ENCODE measurements at regions of chr2 and their contacts with region 1.

Region 1: GRCh38 chr2:218852911-218853667 is 6.5 kb upstream of the WNT6 start:
- DNase-seq: peak; percentile 72
- H3K4me3 Mint-ChIP-seq: no peak overlapping the region
- H3K27ac Mint-ChIP-seq: no peak overlapping the region
- H3K4me1 Mint-ChIP-seq: peaks cover 24% of the 10 kb centered on the region
- H3K27me3 Mint-ChIP-seq: peaks cover 52% of the 10 kb centered on the region
- CTCF ChIP-seq: peak; percentile 86

Region 2: GRCh38 chr2:218659258-218659987 is 193.7 kb before region 1 on chr2 and contains the starts of genes BCS1L and ZNF142:
- CTCF ChIA-PET with region 1: interaction called, 27 read pairs
- intact Hi-C with region 1: no loop called
- DNase-seq: peak; percentile 96
- H3K4me3 Mint-ChIP-seq: peak within 1 kb of the TSS; percentile 99
- H3K27ac Mint-ChIP-seq: peak within 1 kb of the TSS; percentile 87
- H3K4me1 Mint-ChIP-seq: peaks cover 22% of the 10 kb centered on the region
- H3K27me3 Mint-ChIP-seq: no peaks in the 10 kb centered on the region
- CTCF ChIP-seq: no peak
- total RNA-seq, gene BCS1L: 57.9 and 61.7 TPM in 2 replicates
- total RNA-seq, gene ZNF142: 42.8 and 43.3 TPM in 2 replicates

Region 3: GRCh38 chr2:218691234-218691633 is 161.9 kb before region 1 on chr2:
- CTCF ChIA-PET with region 1: interaction called, 25 read pairs
- intact Hi-C with region 1: no loop called
- DNase-seq: no peak
- H3K4me3 Mint-ChIP-seq: no peak overlapping the region
- H3K27ac Mint-ChIP-seq: no peak overlapping the region
- H3K4me1 Mint-ChIP-seq: no peaks in the 10 kb centered on the region
- H3K27me3 Mint-ChIP-seq: no peaks in the 10 kb centered on the region
- CTCF ChIP-seq: no peak

Region 4: GRCh38 chr2:218710687-218711549 is 142.2 kb before region 1 on chr2 and contains the start of gene TTLL4:
- CTCF ChIA-PET with region 1: no interaction called
- intact Hi-C with region 1: loop called (anchors 5 kb)
- DNase-seq: peak; percentile 98
- H3K4me3 Mint-ChIP-seq: peak within 1 kb of the TSS; percentile 79
- H3K27ac Mint-ChIP-seq: peak within 1 kb of the TSS; percentile 90
- H3K4me1 Mint-ChIP-seq: peaks cover 20% of the 10 kb centered on the region
- H3K27me3 Mint-ChIP-seq: no peaks in the 10 kb centered on the region
- CTCF ChIP-seq: peak; percentile 86
- total RNA-seq, gene TTLL4: 67.3 and 75.5 TPM in 2 replicates

Region 5: DNA sequence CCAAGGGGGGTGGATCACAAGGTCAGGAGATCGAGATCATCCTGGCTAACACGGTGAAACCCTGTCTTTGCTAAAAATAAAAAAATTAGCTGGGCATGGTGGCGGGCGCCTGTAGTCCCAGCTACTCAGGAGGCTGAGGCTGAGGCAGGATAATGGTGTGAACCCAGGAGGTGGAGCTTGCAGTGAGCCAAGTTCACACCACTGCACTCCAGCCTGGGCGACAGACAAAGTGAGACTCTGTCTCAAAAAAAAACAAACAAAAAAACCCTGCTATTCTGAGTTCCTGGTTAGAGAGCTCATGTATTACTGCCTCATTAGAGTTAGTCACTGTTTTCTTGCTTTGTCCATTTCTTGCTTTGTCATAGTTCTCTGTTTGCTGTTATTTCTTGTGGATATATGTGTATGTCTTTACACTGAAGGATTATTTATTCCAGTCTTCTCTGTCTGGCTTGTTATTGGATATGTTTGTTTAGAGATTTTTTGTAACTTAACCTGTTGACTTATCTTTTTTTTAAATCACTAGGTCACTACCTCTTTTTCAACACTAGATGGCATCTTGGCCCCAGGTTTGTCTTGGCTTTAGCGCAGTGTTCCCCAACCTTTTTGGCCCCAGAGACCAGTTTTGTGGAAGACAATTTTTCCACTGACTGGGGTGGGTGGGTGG is 125.5 kb before region 1 on chr2:
- CTCF ChIA-PET with region 1: interaction called, 13 read pairs
- intact Hi-C with region 1: no loop called
- DNase-seq: no peak
- H3K4me3 Mint-ChIP-seq: no peak overlapping the region
- H3K27ac Mint-ChIP-seq: no peak overlapping the region
- H3K4me1 Mint-ChIP-seq: peaks cover 25% of the 10 kb centered on the region
- H3K27me3 Mint-ChIP-seq: no peaks in the 10 kb centered on the region
- CTCF ChIP-seq: no peak

Region 6: GRCh38 chr2:218802386-218802994 is 50.6 kb before region 1 on chr2:
- CTCF ChIA-PET with region 1: no interaction called
- intact Hi-C with region 1: loop called (anchors 5 kb)
- DNase-seq: no peak
- H3K4me3 Mint-ChIP-seq: no peak overlapping the region
- H3K27ac Mint-ChIP-seq: no peak overlapping the region
- H3K4me1 Mint-ChIP-seq: peaks cover 29% of the 10 kb centered on the region
- H3K27me3 Mint-ChIP-seq: no peaks in the 10 kb centered on the region
- CTCF ChIP-seq: no peak

Region 7: DNA sequence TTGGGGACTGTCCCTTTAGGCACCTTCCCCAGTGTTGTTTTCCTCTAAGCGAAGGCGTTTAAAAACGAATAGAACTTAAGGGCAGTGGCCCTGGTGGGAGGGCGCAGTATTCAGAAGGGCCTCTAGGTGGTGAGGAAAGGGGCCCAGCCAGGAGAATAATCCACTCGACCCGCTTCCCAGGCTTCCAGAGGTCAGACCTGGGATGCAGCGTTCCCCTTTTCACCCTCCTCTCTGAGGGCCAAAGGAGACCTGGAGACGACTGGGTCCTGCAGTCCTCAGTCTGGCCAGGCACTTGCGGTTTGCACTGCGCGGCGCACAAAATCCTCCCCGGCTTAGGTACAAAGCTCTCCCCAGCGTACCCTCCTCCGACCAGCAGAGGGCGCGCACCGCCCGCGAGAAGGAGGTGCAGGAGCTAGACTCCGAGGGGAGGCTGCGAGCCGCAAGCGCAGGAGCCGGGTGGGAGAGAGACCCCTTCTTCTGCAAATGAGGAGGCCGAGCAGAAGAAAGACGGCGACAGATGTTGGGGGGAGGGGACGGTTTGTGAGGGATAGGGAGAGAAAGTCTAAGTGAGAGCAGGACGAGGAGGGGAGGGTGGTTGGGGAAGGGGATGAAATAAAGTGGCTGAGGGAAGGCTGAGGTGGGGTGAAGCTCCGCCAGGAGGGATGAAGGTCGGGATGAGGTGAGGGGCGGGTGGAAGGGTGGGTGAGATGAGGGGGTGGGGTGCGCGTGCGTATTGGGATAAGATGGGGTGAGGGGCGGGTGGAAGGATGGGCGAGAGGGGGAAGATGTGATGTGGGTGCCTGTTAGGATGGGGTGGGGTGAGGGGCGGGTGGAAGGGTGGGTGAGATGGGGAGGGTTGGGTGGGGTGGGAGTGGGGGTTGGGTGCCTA is 127.0 kb after region 1 on chr2:
- CTCF ChIA-PET with region 1: interaction called, 3 read pairs
- intact Hi-C with region 1: loop called (anchors 10 kb)
- DNase-seq: peak; percentile 92
- H3K4me3 Mint-ChIP-seq: peak overlapping the region; percentile 51
- H3K27ac Mint-ChIP-seq: no peak overlapping the region
- H3K4me1 Mint-ChIP-seq: peaks cover 28% of the 10 kb centered on the region
- H3K27me3 Mint-ChIP-seq: peaks cover 91% of the 10 kb centered on the region
- CTCF ChIP-seq: peak; percentile 93